Calu3 (cell line): ENCODE measurements at regions of chr10 and their contacts with region 1.

Region 1: GRCh38 chr10:114678820-114679219 is 20.7 kb upstream of the ABLIM1 start:
- DNase-seq: no peak
- H3K4me3 Mint-ChIP-seq: peak overlapping the region; percentile 4
- H3K27ac Mint-ChIP-seq: peak overlapping the region; percentile 61
- H3K4me1 Mint-ChIP-seq: peaks cover 35% of the 10 kb centered on the region
- H3K27me3 Mint-ChIP-seq: no peaks in the 10 kb centered on the region
- CTCF ChIP-seq: no peak

Region 2: DNA sequence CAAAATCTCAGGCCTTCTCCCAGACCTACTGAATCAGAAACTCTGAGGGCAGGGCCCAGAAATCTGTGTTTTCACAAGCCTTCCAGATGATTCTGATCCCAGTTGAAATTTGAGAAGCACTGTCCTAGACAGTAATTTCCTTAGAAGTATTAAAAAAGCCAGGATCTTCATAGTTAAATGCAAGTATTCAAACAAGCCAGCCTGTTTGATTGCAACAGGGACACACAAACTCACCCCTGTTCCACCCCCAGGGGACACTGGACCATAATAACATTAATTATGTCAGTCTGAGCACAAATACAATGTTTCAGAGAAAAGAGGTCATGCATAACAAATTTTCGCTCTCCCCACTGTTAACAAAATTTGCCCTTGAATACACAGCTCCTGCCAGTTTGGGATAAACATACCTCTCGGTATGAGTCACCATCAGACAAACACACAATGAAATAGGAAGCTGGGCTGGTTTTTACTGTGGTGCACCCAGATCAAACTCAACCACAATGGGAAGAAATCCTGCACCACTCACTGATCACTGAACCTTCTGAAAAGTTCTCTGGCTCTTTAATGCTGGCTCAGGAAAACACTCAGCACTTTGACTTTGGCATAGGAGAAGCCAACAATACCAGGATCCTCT is 55.0 kb before region 1 on chr10:
- CTCF ChIA-PET with region 1: interaction called, 3 read pairs
- intact Hi-C with region 1: loop called (anchors 2 kb)
- DNase-seq: peak; percentile 39
- H3K4me3 Mint-ChIP-seq: no peak overlapping the region
- H3K27ac Mint-ChIP-seq: no peak overlapping the region
- H3K4me1 Mint-ChIP-seq: peaks cover 59% of the 10 kb centered on the region
- H3K27me3 Mint-ChIP-seq: no peaks in the 10 kb centered on the region
- CTCF ChIP-seq: no peak

Region 3: GRCh38 chr10:114855776-114856543 is 177.1 kb after region 1 on chr10:
- CTCF ChIA-PET with region 1: no interaction called
- intact Hi-C with region 1: no loop called
- DNase-seq: no peak
- H3K4me3 Mint-ChIP-seq: no peak overlapping the region
- H3K27ac Mint-ChIP-seq: peak overlapping the region; percentile 52
- H3K4me1 Mint-ChIP-seq: peaks cover 10% of the 10 kb centered on the region
- H3K27me3 Mint-ChIP-seq: no peaks in the 10 kb centered on the region
- CTCF ChIP-seq: no peak